ENCODE measurements at regions of chr6 and their contacts with region 1.

Region 1: DNA sequence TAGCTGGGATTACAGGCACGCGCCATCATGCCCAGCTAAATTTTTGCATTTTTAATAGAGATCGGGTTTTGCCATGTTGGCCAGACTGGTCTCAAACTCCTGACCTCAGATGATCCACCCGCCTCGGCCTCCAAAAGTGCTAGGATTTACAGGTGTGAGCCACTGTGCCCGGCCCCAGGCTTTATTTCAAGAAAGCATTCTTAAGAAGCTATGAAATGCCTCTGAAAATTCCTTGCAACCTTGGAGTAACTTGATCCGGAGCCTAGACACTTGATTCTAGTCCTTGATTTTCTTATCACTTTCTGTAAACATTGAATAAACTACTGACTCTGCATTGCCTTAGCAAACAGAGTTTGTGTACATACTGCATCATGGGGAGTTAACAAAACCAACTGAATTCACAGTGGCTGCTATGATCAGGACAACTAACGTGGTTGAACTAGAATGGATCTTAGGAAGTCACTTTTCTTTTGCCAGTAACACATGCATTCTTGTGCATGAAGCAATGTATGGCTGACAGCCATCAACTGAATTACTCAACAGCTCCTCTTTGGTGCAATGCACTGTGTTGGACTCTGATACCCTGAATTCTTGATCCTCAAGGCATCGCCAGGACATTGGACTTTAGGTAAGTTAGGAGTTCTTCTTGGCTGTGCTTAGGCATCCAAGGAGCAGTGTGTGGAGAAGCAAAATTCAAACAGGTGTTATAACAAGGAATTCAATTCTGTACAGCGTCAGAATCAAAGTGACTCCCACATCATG is 102.8 kb upstream of the TMEM170B start:
- DNase-seq: no peak

Region 2: GRCh38 chr6:10831609-10832008 is 603.1 kb before region 1 on chr6:
- intact Hi-C with region 1: no loop called
- DNase-seq: no peak

Region 3: DNA sequence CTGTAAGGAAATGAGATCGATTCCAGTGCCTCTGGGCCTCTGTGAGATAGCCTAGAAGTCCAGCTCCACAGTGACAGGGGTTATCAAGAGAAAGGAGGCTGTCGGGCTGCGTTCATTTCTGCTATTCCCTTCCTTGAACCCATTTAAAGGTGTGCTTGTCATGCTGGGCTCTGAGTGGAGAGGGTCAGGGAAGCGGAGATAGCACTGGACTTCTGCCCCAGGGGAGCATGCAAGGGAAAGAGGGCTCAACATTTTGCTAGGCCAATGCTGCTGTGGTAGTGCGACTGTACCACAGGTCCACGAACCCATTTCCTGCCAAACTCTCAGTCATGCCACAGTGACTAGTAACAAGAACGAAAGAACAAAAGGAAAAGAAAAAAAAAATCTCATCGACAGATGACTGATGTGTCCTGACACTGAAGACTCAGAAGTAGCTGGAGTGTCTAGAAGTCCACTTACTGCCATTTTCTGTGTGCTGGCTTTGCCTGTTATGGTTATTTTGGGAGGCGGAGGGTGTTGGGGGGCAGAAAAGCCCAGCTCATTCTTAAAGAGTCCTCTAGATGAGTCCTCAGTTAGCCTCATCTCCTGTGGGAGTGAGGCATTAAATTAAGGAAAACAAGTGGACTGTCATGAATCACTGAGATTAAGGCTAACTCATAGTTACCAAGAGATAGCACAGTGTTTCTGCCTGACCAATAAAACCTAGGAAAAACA is 210.3 kb before region 1 on chr6:
- intact Hi-C with region 1: loop called (anchors 5 kb)
- DNase-seq: no peak

Region 4: GRCh38 chr6:11366183-11366933 is 68.4 kb before region 1 on chr6:
- intact Hi-C with region 1: loop called (anchors 5 kb)
- DNase-seq: no peak

Region 5: GRCh38 chr6:11397622-11398450 is 36.9 kb before region 1 on chr6:
- intact Hi-C with region 1: no loop called
- DNase-seq: no peak

Measured in cardiac septum (tissue), 1 donor.